Ascending aorta (tissue), 2 donors: ENCODE measurements at regions of chr17 and their contacts with region 1.

Region 1: GRCh38 chr17:12415031-12415430 is 250.7 kb upstream of the MYOCD start:
- DNase-seq: peak in 1 of 2 donors; percentile 78
- H3K4me3 ChIP-seq: no peak overlapping the region
- H3K27ac ChIP-seq: peak overlapping the region; percentile 63 to 67
- H3K4me1 ChIP-seq: peaks cover 0 to 10% of the 10 kb centered on the region in 2 donors
- H3K27me3 ChIP-seq: no peaks in the 10 kb centered on the region
- CTCF ChIP-seq: no peak

Region 2: GRCh38 chr17:12282056-12282455 is 133.0 kb before region 1 on chr17:
- intact Hi-C with region 1: loop called (anchors 5 kb)
- DNase-seq: no peak
- H3K4me3 ChIP-seq: no peak overlapping the region
- H3K27ac ChIP-seq: peak overlapping the region; percentile 76 to 77
- H3K4me1 ChIP-seq: peaks cover 0 to 15% of the 10 kb centered on the region in 2 donors
- H3K27me3 ChIP-seq: no peaks in the 10 kb centered on the region
- CTCF ChIP-seq: no peak

Region 3: GRCh38 chr17:12301551-12301950 is 113.5 kb before region 1 on chr17:
- intact Hi-C with region 1: loop called (anchors 5 kb)
- DNase-seq: no peak
- H3K4me3 ChIP-seq: no peak overlapping the region
- H3K27ac ChIP-seq: peak overlapping the region; percentile 74 to 81
- H3K4me1 ChIP-seq: peaks cover 0 to 8% of the 10 kb centered on the region in 2 donors
- H3K27me3 ChIP-seq: no peaks in the 10 kb centered on the region
- CTCF ChIP-seq: no peak